K562 (cell line): ENCODE measurements at regions of chr6 and their contacts with region 1.

Region 1: GRCh38 chr6:137271245-137272183 is 52.3 kb upstream of the IFNGR1 start:
- DNase-seq: peak in 2 of 4 experiments; percentile 39 to 61
- ATAC-seq: peak; percentile 90
- H3K4me3 ChIP-seq: no peak overlapping the region
- H3K27ac ChIP-seq: no peak overlapping the region
- H3K4me1 ChIP-seq: no peaks in the 10 kb centered on the region
- H3K27me3 ChIP-seq: no peaks in the 10 kb centered on the region; a peak in 1 of 5 replicates
- CTCF ChIP-seq: peak; percentile 74 to 93 (median 79); a peak in 5 of 6 replicates
- EP300 ChIP-seq: no peak
- POLR2A ChIP-seq: no peak
- RAD21 ChIP-seq: peak; percentile 98 to 100

Region 2: DNA sequence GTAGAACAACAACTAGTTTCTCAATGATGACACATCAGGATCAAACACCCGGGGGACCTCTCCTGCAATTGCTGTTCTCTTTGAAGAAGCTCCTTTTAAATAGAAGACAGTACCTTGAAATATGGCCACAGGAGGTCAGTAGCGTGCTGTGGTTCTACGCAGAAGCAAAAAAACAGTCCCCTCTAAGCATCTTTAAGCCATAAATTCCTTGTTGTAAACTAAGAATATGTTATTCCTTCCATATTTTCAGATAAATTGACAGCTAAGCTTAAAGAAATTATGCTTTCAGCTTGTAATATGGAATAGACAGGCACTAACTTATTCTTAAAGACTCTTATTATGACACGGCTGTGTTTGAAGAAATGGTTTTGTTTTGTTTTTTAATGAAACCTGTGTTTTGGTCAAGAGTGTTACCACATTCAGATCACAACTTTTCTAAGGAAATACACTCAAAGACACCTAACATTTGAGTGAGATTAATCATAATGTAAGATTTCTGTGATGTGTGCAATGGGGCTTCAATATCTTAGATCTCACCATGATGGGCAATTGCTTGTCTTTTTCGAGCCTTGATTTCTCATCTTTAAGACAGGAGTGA is 177.0 kb before region 1 on chr6:
- CTCF ChIA-PET with region 1: no interaction called
- POLR2A ChIA-PET with region 1: no interaction called
- in situ Hi-C with region 1: no loop called
- intact Hi-C with region 1: loop called (anchors 1 kb)
- DNase-seq: peak; percentile 50 to 76 (median 64)
- ATAC-seq: peak; percentile 90
- H3K4me3 ChIP-seq: no peak overlapping the region
- H3K27ac ChIP-seq: no peak overlapping the region
- H3K4me1 ChIP-seq: no peaks in the 10 kb centered on the region
- H3K27me3 ChIP-seq: peaks cover 0 to 8% of the 10 kb centered on the region in 2 experiments; a peak in 1 of 5 replicates
- CTCF ChIP-seq: peak; percentile 68 to 91 (median 72)
- EP300 ChIP-seq: no peak
- POLR2A ChIP-seq: no peak
- RAD21 ChIP-seq: peak; percentile 97 to 98

Region 3: DNA sequence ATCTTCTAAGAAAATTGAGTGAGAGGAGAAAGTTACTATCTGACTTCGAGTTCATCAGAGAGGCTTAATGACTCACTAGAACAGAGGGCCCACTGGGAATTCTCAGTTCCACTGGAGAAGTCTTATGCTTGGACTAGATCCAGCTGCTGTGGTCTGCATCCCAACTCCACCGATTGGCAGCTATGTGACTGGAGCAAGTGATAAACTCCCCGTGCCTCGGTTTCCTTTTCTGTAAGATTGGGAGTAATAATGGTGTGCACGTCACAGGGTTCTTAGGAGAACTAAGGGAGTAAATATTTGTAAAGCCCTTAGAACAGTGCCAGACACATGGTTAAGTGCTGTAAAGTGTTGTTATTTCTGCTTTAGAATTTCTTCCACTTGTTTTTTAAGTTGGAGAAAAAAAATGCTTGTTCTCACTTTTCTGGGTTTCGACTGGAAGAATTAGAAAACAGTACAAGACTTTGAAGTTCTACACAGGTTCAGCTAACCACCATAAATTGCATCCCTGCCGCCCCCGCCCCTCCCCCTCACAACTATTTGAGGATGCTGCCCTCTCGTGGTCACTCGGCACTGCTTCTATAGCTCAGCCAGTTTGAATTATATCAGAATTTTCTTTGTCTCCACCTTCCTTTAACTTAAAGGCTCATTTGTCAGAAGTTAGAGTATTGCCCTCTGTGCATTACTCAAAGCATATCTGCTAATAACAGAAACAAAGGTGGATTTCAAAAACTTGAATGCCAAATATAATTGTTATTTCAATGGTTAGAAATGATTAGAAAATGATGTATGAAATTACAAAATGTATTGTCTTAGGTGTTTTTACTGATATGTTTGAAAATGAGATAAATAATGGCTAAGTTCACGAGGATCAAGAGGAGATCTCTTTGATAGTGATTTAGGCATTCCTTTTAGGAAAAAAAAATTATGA is 42.7 kb after region 1 on chr6:
- CTCF ChIA-PET with region 1: interaction called, 18 read pairs
- POLR2A ChIA-PET with region 1: no interaction called
- in situ Hi-C with region 1: no loop called
- intact Hi-C with region 1: loop called (anchors 1 kb)
- DNase-seq: peak; percentile 73 to 82 (median 80)
- ATAC-seq: peak; percentile 98
- H3K4me3 ChIP-seq: no peak overlapping the region
- H3K27ac ChIP-seq: no peak overlapping the region
- H3K4me1 ChIP-seq: 0 out of 5 replicates have a peak, but pooled peaks cover 0 to 6% of the 10 kb centered on the region in 2 experiments
- H3K27me3 ChIP-seq: peaks cover 0 to 4% of the 10 kb centered on the region in 2 experiments; a peak in 1 of 5 replicates
- CTCF ChIP-seq: peak; percentile 85 to 95 (median 89)
- EP300 ChIP-seq: no peak
- POLR2A ChIP-seq: no peak
- RAD21 ChIP-seq: peak; percentile 95 to 98

Region 4: GRCh38 chr6:137518386-137518983 is 247.0 kb after region 1 on chr6:
- CTCF ChIA-PET with region 1: no interaction called
- POLR2A ChIA-PET with region 1: no interaction called
- in situ Hi-C with region 1: no loop called
- intact Hi-C with region 1: no loop called
- DNase-seq: no peak
- ATAC-seq: no peak
- H3K4me3 ChIP-seq: no peak overlapping the region
- H3K27ac ChIP-seq: no peak overlapping the region
- H3K4me1 ChIP-seq: no peaks in the 10 kb centered on the region
- H3K27me3 ChIP-seq: peaks cover 4 to 8% of the 10 kb centered on the region in 2 experiments; a peak in 3 of 5 replicates
- CTCF ChIP-seq: no peak
- EP300 ChIP-seq: no peak
- POLR2A ChIP-seq: no peak
- RAD21 ChIP-seq: no peak

Region 5: DNA sequence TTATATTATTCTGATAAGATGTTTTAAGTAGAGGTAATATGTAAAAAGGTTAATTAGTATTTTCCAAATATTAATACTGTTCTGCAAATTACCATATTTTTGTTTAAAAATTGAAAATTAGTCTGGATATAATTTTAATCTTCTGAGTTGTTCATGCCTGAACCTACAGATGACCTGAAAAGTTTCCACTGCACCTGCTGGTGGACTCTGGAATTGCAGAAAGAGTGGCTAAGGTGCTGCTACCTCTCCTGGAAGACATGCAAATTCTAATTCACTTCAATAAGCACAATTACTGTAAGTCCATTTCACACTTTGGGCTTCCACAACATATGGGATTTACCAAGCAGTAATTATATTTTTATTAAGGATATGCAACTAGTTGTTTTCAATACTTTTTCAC is 300.3 kb after region 1 on chr6:
- CTCF ChIA-PET with region 1: no interaction called
- POLR2A ChIA-PET with region 1: no interaction called
- in situ Hi-C with region 1: no loop called
- intact Hi-C with region 1: loop called (anchors 10 kb)
- DNase-seq: peak; percentile 42 to 63 (median 59)
- ATAC-seq: peak; percentile 84
- H3K4me3 ChIP-seq: no peak overlapping the region
- H3K27ac ChIP-seq: no peak overlapping the region
- H3K4me1 ChIP-seq: no peaks in the 10 kb centered on the region
- H3K27me3 ChIP-seq: no peaks in the 10 kb centered on the region; a peak in 1 of 5 replicates
- CTCF ChIP-seq: peak; percentile 53 to 68 (median 58); a peak in 5 of 6 replicates
- EP300 ChIP-seq: no peak
- POLR2A ChIP-seq: no peak
- RAD21 ChIP-seq: no peak

Region 6: DNA sequence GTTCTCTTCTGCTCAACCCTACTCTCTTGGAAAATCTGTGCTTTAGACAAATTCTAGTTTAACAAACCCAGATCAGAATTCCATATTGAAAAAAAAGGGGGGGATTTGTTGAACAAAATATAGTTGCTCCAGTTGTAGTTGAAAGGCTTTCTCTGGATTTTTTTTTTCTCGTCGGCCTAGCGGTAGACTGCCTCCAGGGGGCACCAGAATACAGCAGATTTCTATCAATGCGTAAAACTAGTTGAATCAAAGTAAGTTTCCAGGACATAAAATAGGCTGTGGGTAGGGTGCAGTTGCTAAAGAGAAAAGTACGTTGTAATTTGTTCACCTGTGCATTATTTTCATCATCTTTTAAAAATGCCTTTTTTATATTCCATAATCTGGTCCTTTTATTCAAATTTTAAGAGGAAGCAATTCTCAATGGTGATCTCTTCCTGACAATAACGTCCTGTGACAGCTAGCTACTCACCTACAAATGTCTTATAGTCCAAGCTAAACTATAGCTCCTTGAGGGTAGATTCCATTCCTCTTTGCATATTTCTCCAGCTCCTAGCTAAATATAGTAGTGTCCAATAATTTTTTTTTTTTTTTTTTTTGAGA is 730.3 kb after region 1 on chr6:
- CTCF ChIA-PET with region 1: no interaction called
- POLR2A ChIA-PET with region 1: no interaction called
- in situ Hi-C with region 1: no loop called
- intact Hi-C with region 1: loop called (anchors 10 kb)
- DNase-seq: peak; percentile 48 to 74 (median 58)
- ATAC-seq: peak; percentile 60
- H3K4me3 ChIP-seq: no peak overlapping the region
- H3K27ac ChIP-seq: no peak overlapping the region
- H3K4me1 ChIP-seq: no peaks in the 10 kb centered on the region
- H3K27me3 ChIP-seq: peaks cover 4 to 7% of the 10 kb centered on the region in 2 experiments; a peak in 2 of 5 replicates
- CTCF ChIP-seq: peak; percentile 82 to 94 (median 86)
- EP300 ChIP-seq: no peak
- POLR2A ChIP-seq: no peak
- RAD21 ChIP-seq: peak; percentile 77 to 84